HEK293 (cell line): ENCODE measurements at regions of chr1 and their contacts with region 1.

Region 1: GRCh38 chr1:46179138-46180081 is 3.1 kb upstream of the P3R3URF start:
- H3K4me3 ChIP-seq: no peak overlapping the region
- H3K27ac ChIP-seq: no peak overlapping the region
- H3K4me1 ChIP-seq: peaks cover 3% of the 10 kb centered on the region; the same call in 1 of the 2 replicates
- CTCF ChIP-seq: peak; percentile 99

Region 2: GRCh38 chr1:45876000-45876617 is 303.3 kb before region 1 on chr1:
- CTCF ChIA-PET with region 1: no interaction called
- POLR2A ChIA-PET with region 1: no interaction called
- H3K4me3 ChIP-seq: no peak overlapping the region
- H3K27ac ChIP-seq: no peak overlapping the region
- H3K4me1 ChIP-seq: peaks cover 10% of the 10 kb centered on the region; the same call in 1 of the 2 replicates
- CTCF ChIP-seq: no peak

Region 3: GRCh38 chr1:46132529-46133180 is 46.8 kb before region 1 on chr1 and contains the start of gene PIK3R3:
- CTCF ChIA-PET with region 1: interaction called, 16 read pairs
- POLR2A ChIA-PET with region 1: interaction called, 15 read pairs
- H3K4me3 ChIP-seq: peak within 1 kb of the TSS; percentile 66
- H3K27ac ChIP-seq: peak within 1 kb of the TSS; percentile 100
- H3K4me1 ChIP-seq: peaks cover 10% of the 10 kb centered on the region
- CTCF ChIP-seq: peak; percentile 52; the same call in 1 of the 2 replicates

Region 4: GRCh38 chr1:46263146-46263545 is 83.7 kb after region 1 on chr1:
- CTCF ChIA-PET with region 1: no interaction called
- POLR2A ChIA-PET with region 1: no interaction called
- H3K4me3 ChIP-seq: no peak overlapping the region
- H3K27ac ChIP-seq: no peak overlapping the region
- H3K4me1 ChIP-seq: no peaks in the 10 kb centered on the region
- CTCF ChIP-seq: no peak

Region 5: GRCh38 chr1:46580140-46580903 is 400.9 kb after region 1 on chr1:
- CTCF ChIA-PET with region 1: no interaction called
- POLR2A ChIA-PET with region 1: no interaction called
- H3K4me3 ChIP-seq: no peak overlapping the region
- H3K27ac ChIP-seq: no peak overlapping the region
- H3K4me1 ChIP-seq: peaks cover 2% of the 10 kb centered on the region; the same call in 1 of the 2 replicates
- CTCF ChIP-seq: no peak